Prostate gland (tissue), 2 donors: ENCODE measurements at regions of chr20 and their contacts with region 1.

Region 1: GRCh38 chr20:55977690-55978459 is 27.4 kb downstream of the CBLN4 start:
- DNase-seq: no peak
- H3K4me3 ChIP-seq: no peak overlapping the region
- H3K27ac ChIP-seq: no peak overlapping the region
- H3K4me1 ChIP-seq: no peaks in the 10 kb centered on the region
- H3K27me3 ChIP-seq: no peaks in the 10 kb centered on the region
- CTCF ChIP-seq: no peak
- POLR2A ChIP-seq: no peak

Region 2: DNA sequence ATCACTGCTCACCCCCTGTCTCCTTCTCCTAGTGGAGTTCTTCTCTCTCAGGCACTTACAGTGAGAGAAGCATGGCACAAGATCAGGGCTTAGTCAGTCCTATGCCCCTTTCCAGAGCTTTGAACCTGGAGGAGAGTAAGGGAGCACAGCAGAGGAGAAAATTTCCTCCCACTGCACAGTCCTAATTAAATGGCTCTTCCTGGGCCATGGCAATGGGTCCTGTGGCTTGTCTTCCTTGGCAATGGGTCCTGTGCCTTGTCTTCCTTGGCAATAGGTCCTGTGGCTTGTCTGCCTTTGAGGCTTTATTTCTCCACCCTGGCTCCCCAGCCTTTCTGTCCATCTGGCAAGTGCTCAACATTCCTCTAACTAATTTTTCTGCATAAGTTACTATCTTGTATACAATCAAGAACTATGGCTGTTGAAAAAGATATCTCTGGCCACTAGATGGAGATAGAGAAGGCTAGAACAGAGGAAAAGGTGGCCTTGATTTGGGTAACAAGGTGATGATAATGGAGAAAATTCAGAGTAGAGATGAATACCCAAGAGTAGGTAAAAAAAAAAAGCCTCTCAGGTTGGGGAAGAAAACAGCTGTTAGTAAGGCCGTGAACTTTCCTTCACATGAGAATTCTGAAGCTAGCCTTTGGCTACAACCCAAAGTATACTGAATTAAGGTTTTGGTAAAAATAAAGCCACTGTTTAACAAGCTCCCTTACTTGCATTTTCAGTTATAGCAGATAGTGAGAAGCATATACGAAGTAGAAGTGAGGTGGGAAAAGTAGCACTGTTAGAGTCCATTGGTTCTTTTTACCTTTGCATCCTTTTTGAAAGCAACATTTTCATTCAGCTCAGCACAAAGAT is 997.5 kb before region 1 on chr20:
- intact Hi-C with region 1: loop called (anchors 10 kb)
- DNase-seq: no peak
- H3K4me3 ChIP-seq: no peak overlapping the region
- H3K27ac ChIP-seq: no peak overlapping the region
- H3K4me1 ChIP-seq: peaks cover 7% of the 10 kb centered on the region
- H3K27me3 ChIP-seq: no peaks in the 10 kb centered on the region
- CTCF ChIP-seq: peak in 3 of 4 experiments; percentile 55 to 60 (median 57)
- POLR2A ChIP-seq: no peak